ENCODE measurements at regions of chr5 and their contacts with region 1.

Region 1: DNA sequence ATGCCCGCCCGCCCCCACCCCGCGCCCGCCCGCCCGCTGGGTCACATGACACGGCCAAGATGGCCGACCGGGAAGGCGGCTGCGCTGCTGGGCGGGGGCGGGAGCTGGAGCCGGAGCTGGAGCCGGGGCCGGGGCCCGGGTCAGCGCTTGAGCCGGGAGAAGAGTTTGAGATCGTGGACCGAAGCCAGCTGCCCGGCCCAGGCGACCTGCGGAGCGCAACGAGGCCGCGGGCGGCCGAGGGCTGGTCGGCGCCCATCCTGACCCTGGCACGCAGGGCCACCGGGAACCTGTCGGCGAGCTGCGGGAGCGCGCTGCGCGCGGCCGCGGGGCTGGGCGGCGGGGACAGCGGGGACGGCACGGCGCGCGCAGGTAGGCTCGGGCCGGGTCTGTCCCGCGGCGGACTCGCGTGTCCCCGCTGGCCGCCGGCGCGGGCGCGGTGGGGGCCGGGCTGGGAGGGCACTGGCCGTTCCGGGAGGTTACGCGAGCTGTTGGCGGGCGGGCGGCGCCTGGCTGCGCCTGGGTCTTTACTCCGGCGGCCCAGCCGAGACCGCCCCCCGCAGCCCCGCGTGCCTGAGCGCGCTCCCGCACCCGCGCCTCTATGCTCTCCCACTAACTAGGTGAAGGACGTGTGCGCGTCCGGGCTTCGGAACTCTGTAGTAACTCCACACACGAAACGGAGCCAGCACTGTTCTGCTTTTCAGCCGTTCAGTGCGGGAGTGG is at the start of gene RUFY1:
- DNase-seq: peak; percentile 20
- ATAC-seq: peak; percentile 81
- H3K4me3 ChIP-seq: peak within 1 kb of the TSS; percentile 67
- H3K27ac ChIP-seq: peak within 1 kb of the TSS; percentile 90
- H3K4me1 ChIP-seq: no peaks in the 10 kb centered on the region
- H3K27me3 ChIP-seq: no peaks in the 10 kb centered on the region
- CTCF ChIP-seq: no peak
- EP300 ChIP-seq: no peak
- POLR2A ChIP-seq: peak; percentile 89
- RAD21 ChIP-seq: no peak
- polyA plus RNA-seq, gene RUFY1: 5.7 to 8.1 TPM

Region 2: DNA sequence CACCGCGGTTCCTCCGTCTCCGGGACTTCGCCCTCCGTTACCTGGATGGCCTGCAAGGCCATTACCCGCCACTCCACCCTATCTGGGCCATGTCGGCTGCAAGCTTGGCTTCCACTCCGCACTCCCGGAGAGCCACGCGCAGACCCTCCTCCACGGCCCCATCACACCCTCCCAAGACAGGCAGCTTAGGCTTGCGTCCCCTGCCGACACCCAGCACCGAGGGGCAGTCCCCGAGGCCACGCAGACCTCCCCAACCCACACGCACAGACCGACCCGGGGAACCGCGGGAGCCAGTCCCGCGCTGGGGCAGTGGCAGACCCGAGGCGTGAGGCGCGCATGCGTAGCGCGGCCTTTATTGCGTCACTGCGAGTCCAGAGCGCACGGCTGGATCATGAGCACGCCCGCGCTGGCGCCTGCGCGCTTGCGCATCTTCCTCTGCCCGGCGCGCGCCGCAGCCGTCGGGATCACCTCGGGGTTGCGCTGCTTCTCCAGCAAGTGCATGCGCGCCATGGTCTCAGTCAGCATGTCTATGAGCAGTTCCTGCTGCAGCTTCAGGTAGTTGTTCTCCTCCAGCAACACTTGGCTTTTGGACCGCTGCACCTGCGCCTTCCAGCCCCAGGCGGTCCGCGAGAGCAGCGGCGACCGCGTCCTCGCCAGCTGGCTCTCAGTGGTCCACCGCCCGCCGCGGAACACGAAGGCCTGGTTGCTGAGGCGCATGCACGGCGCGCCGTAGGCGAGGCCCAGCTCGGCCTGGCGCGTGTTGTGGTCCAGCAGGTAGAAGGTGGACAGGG is 127.7 kb after region 1 on chr5:
- CTCF ChIA-PET with region 1: no interaction called
- POLR2A ChIA-PET with region 1: no interaction called
- RAD21 ChIA-PET with region 1: no interaction called
- SMC1A ChIA-PET with region 1: no interaction called
- in situ Hi-C with region 1: no loop called
- intact Hi-C with region 1: loop called (anchors 5 kb)
- DNase-seq: peak; percentile 86
- ATAC-seq: peak; percentile 92
- H3K4me3 ChIP-seq: peak overlapping the region; percentile 76
- H3K27ac ChIP-seq: peak overlapping the region; percentile 94
- H3K4me1 ChIP-seq: peaks cover 11% of the 10 kb centered on the region
- H3K27me3 ChIP-seq: no peaks in the 10 kb centered on the region
- CTCF ChIP-seq: peak in 1 of 3 experiments; percentile 21; a peak in 1 of 6 replicates
- EP300 ChIP-seq: no peak
- POLR2A ChIP-seq: peak; percentile 99
- RAD21 ChIP-seq: no peak